CD4-positive, alpha-beta memory T cell (primary cell): ENCODE measurements at regions of chr17 and their contacts with region 1.

Region 1: DNA sequence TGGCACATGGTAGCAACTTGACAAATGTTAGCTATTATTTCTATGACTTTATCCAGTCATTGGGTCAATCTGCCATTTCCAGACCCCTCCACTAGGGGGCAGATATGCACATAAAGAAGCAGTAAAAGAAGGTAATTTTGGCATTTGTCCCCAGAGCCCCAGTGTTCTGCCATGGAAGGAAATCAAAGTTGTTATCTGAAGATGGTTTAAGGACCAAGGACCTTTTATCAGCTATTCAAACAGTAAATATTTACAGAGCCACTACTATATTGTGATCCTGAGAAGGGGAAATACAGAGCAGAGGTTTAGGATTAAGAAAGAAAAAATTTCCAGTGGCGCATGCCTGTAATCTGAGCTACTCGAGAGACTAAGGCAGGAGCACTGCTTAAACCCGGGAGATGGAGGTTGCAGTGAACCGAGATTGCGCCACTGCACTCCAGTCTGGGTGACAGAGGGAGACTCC is 20.0 kb downstream of the TRAF4 start:
- DNase-seq: peak; percentile 71 to 82 (median 77)
- H3K4me3 ChIP-seq: no peak overlapping the region
- H3K4me3 Mint-ChIP-seq: no peak overlapping the region
- H3K27ac ChIP-seq: no peak overlapping the region
- H3K27ac Mint-ChIP-seq: peak overlapping the region in 5 of 7 donors; percentile 77 to 84 (median 82)
- H3K4me1 ChIP-seq: no peaks in the 10 kb centered on the region
- H3K4me1 Mint-ChIP-seq: peaks cover 3 to 8% (median 4%) of the 10 kb centered on the region in 4 donors
- H3K27me3 ChIP-seq: no peaks in the 10 kb centered on the region
- H3K27me3 Mint-ChIP-seq: no peaks in the 10 kb centered on the region

Region 2: GRCh38 chr17:28777178-28777577 is 13.3 kb after region 1 on chr17:
- CTCF ChIA-PET with region 1: interaction called, 60 read pairs
- POLR2A ChIA-PET with region 1: no interaction called
- intact Hi-C with region 1: no loop called
- DNase-seq: no peak
- H3K4me3 ChIP-seq: no peak overlapping the region
- H3K4me3 Mint-ChIP-seq: no peak overlapping the region
- H3K27ac ChIP-seq: no peak overlapping the region
- H3K27ac Mint-ChIP-seq: peak overlapping the region; percentile 10 to 79 (median 57)
- H3K4me1 ChIP-seq: peaks cover 14% of the 10 kb centered on the region
- H3K4me1 Mint-ChIP-seq: peaks cover 27 to 37% (median 33%) of the 10 kb centered on the region in 4 donors
- H3K27me3 ChIP-seq: no peaks in the 10 kb centered on the region
- H3K27me3 Mint-ChIP-seq: no peaks in the 10 kb centered on the region

Region 3: GRCh38 chr17:28818819-28819221 is 55.0 kb after region 1 on chr17:
- CTCF ChIA-PET with region 1: interaction called, 11 read pairs
- POLR2A ChIA-PET with region 1: no interaction called
- intact Hi-C with region 1: no loop called
- DNase-seq: no peak
- H3K4me3 ChIP-seq: no peak overlapping the region
- H3K4me3 Mint-ChIP-seq: no peak overlapping the region
- H3K27ac ChIP-seq: no peak overlapping the region
- H3K27ac Mint-ChIP-seq: peak overlapping the region in 6 of 7 donors; percentile 1 to 65 (median 37)
- H3K4me1 ChIP-seq: peaks cover 7% of the 10 kb centered on the region
- H3K4me1 Mint-ChIP-seq: peaks cover 0 to 16% (median 13%) of the 10 kb centered on the region in 4 donors
- H3K27me3 ChIP-seq: no peaks in the 10 kb centered on the region
- H3K27me3 Mint-ChIP-seq: no peaks in the 10 kb centered on the region

Region 4: DNA sequence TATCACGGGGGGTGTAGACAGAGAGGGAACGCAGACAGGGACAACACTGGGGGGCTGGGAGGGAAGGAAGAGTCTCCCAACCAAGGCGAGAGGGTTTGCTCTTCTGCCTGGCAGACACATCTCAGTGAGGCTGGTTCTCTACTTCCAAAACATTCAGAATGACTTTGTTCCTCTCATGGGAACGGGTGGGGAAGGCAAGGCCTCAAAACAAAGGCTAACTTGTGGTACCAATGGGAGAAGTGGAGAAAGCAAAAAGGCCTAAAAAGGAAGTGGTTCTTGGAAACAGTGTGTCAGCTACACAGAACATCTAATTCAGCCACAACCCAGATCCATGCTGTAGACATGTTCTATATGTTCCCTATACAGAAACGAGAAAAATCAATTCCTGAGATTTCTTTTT is 126.2 kb after region 1 on chr17:
- CTCF ChIA-PET with region 1: interaction called, 55 read pairs
- POLR2A ChIA-PET with region 1: interaction called, 4 read pairs
- intact Hi-C with region 1: no loop called
- DNase-seq: no peak
- H3K4me3 ChIP-seq: no peak overlapping the region
- H3K4me3 Mint-ChIP-seq: no peak overlapping the region
- H3K27ac ChIP-seq: no peak overlapping the region
- H3K27ac Mint-ChIP-seq: peak overlapping the region in 5 of 7 donors; percentile 17 to 62 (median 36)
- H3K4me1 ChIP-seq: peaks cover 42% of the 10 kb centered on the region
- H3K4me1 Mint-ChIP-seq: peaks cover 27 to 66% (median 43%) of the 10 kb centered on the region in 4 donors
- H3K27me3 ChIP-seq: no peaks in the 10 kb centered on the region
- H3K27me3 Mint-ChIP-seq: no peaks in the 10 kb centered on the region

Region 5: DNA sequence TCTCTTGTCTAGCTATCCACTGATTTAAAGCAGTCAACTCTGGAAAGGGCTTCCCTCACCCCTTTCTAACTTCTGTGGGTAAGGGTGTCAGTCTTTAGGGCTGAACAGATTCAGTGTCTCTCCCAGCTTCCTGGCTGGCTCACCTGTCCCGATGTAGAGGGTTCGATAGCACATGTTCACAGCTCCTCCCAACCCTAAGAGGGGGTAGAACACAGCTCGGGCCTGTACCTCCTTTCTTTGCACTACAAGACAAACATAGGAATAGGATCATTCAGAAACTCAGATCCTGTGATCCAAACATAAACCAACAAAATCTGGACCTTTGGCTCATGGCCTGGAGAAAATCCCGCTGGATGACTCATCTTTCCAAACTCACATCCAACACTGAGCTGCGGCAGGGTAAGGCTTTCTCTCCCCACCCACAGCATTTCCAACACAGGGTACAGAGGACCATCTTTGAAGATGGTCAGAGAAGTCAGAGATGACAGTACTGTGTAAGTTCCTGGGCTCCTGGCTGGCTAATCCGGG is 144.9 kb after region 1 on chr17:
- CTCF ChIA-PET with region 1: interaction called, 48 read pairs
- POLR2A ChIA-PET with region 1: no interaction called
- intact Hi-C with region 1: loop called (anchors 1 kb)
- DNase-seq: no peak
- H3K4me3 ChIP-seq: no peak overlapping the region
- H3K4me3 Mint-ChIP-seq: peak overlapping the region in 1 of 8 donors; percentile 38
- H3K27ac ChIP-seq: no peak overlapping the region
- H3K27ac Mint-ChIP-seq: peak overlapping the region in 3 of 7 donors; percentile 15 to 55 (median 42)
- H3K4me1 ChIP-seq: no peaks in the 10 kb centered on the region
- H3K4me1 Mint-ChIP-seq: peaks cover 0 to 5% (median 1%) of the 10 kb centered on the region in 4 donors
- H3K27me3 ChIP-seq: no peaks in the 10 kb centered on the region
- H3K27me3 Mint-ChIP-seq: no peaks in the 10 kb centered on the region

Region 6: DNA sequence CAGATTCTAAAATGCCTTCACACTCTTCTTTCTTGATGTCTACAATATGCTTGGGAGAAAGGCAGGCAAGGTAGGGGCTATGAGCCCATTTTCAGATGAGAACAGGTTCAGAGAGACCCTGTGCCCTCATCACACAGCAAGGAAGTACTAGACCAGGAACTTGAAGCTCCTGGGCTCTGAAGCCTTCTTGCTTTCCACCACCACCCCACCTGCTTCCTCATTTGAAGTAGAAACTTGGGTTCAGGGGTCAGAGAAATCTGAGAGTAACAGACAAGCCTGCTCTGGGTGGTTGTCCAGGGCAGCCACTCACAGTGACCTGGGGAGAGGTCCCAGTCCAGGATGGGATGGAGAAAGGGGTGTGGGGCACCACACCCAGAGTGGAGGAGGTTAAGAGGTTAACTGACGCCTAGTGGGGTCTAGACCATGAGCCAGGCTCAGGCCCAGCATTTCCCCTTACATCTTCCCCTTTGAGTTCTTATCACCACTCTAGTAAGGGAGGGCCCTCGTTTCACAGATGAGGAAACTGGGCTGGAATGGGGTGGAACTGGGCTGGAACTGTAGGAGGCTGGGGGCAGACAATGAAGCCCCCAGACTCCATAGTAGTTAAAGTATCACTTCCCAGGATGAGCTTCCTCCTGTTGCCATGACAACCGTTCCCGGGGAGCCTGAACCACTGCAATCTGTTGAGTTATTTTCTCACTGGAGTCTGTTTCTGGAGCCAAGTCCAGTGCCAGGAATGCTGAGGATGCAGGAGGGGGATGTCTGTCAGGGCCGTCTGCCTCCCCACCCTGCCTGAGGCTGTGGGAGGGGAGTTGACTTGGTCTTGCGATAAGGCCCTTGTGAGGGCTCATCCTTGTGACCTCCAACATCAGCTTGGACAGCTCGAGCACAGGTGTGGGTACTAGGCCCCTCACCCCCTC is 203.6 kb after region 1 on chr17:
- CTCF ChIA-PET with region 1: interaction called, 11 read pairs
- POLR2A ChIA-PET with region 1: no interaction called
- intact Hi-C with region 1: no loop called
- DNase-seq: peak in 1 of 5 donors; percentile 25
- H3K4me3 ChIP-seq: no peak overlapping the region
- H3K4me3 Mint-ChIP-seq: no peak overlapping the region
- H3K27ac ChIP-seq: no peak overlapping the region
- H3K27ac Mint-ChIP-seq: peak overlapping the region in 2 of 7 donors; percentile 19 to 39
- H3K4me1 ChIP-seq: no peaks in the 10 kb centered on the region
- H3K4me1 Mint-ChIP-seq: peaks cover 0 to 3% (median 0%) of the 10 kb centered on the region in 4 donors
- H3K27me3 ChIP-seq: no peaks in the 10 kb centered on the region
- H3K27me3 Mint-ChIP-seq: peaks cover 8 to 14% of the 10 kb centered on the region in 2 donors